ENCODE measurements at regions of chr5 and their contacts with region 1.

Region 1: DNA sequence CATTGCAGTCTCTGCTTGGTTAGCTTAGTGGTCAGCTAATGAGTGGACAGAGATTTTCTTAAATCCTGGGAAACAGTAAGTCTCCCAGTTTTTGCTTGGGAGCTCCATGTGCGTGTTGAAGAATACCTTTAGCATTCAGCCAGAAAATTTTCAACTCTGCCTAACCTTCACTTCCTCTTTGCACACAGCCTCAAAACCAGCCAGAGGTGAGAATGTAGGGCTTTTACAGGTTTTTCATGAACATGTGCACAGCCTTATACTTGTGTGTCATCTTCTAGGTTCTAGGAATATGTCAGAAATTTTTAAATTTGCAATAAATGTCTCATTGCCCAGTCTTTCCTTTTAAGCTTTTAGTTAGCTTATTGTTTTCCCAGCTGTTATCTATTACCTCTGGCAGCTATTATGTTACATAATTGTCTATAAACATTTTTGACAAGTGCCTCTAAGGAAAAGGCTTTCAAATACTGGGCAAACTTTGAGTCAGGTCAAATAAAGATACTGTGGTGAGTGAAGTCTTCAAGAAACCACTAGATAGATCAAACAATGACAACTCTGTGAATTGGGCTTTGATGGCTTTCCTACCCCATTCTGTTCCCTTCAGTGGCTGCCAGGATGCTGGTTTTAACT is 12.7 kb downstream of the ADGRV1 start:
- DNase-seq: peak; percentile 86
- ATAC-seq: peak; percentile 96
- H3K4me3 ChIP-seq: no peak overlapping the region
- H3K27ac ChIP-seq: peak overlapping the region; percentile 68
- H3K4me1 ChIP-seq: peaks cover 26% of the 10 kb centered on the region
- H3K27me3 ChIP-seq: no peaks in the 10 kb centered on the region
- CTCF ChIP-seq: no peak

Region 2: DNA sequence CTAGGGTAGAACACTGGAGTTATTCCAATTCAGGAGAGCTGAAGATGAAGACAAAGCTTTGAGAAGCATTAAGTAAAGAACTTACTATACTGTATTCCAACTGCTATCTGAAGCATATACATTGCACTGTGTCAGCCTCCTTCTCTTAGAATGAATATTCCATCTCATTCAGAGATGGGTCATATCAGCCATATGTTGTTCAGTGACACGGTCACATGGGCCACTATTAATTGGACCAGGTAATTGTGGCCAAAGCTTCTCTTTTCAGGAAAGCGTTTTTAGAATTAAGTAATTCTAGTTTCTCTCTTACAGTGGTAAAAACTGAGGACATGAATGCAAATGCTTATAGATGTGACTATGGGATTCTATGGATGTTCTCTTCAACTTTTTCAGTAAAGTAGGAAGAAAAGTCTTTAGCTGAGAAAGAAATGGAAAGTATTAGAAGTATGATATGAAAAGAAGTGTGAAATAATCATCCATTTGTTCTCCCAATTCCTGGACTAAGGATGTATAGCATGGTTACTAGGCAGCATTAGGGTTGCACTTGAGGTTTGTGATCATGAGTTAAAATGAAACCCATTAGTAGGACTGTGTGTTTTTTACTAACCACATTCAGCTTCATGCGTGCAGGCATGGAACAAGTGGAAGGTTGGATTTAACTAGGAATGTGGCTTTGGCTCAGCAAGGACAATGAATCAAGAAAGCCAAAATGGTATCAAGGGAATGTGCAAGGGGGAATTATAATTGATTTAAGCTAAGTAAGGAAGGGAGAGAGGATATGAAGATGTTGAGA is 202.6 kb before region 1 on chr5:
- CTCF ChIA-PET with region 1: no interaction called
- POLR2A ChIA-PET with region 1: no interaction called
- intact Hi-C with region 1: no loop called
- DNase-seq: no peak
- ATAC-seq: peak; percentile 55
- H3K4me3 ChIP-seq: no peak overlapping the region
- H3K27ac ChIP-seq: no peak overlapping the region
- H3K4me1 ChIP-seq: no peaks in the 10 kb centered on the region
- H3K27me3 ChIP-seq: no peaks in the 10 kb centered on the region
- CTCF ChIP-seq: no peak

Region 3: DNA sequence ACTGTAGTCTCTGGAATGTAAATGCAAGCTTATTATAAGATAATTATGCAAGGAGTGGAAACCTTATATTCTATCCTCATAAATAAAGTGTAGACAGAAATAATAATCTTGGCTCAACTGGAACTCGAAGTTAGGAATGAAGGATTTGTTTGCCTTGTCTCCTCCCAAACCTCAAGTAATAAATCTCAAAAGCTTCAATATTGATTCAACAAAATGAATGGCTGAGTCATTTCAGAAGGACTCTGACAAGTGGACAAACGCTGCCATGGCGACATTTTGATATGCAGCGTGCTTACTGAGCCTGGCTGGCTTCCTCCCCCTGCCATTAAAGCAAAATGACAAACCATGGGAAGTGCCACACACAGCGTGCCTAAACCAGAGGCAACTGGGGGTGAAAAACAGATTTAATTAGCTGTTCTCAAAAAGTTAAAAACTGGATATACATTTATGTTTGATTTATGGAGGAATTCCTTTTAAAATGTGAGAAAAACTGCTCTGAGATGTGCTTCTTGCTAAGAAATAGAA is 23.1 kb before region 1 on chr5:
- CTCF ChIA-PET with region 1: no interaction called
- POLR2A ChIA-PET with region 1: interaction called, 3 read pairs
- intact Hi-C with region 1: loop called (anchors 1 kb)
- DNase-seq: peak; percentile 98
- ATAC-seq: peak; percentile 92
- H3K4me3 ChIP-seq: peak overlapping the region; percentile 49
- H3K27ac ChIP-seq: peak overlapping the region; percentile 70
- H3K4me1 ChIP-seq: peaks cover 37% of the 10 kb centered on the region
- H3K27me3 ChIP-seq: no peaks in the 10 kb centered on the region
- CTCF ChIP-seq: no peak

Region 4: DNA sequence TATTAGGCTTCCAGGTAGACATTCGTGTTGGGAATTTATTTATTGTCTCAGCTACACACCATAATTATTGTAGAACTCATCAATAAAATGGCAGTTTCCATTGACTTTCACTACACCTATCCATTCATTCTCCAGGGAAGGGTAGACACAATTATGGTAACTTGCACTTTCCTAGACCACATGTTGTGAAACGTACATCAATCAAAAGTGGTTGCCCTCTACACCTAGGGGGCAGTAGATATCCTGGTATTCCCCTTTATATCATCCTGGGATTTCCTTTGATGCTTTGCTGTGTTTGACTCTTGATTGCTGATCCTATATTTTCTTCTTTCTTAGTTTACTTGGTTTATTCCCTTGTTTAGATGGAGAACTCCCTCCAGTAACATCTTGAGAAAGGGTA is 35.3 kb after region 1 on chr5:
- CTCF ChIA-PET with region 1: interaction called, 8 read pairs
- POLR2A ChIA-PET with region 1: no interaction called
- intact Hi-C with region 1: loop called (anchors 1 kb)
- DNase-seq: peak; percentile 53
- ATAC-seq: peak; percentile 45; the same call in 1 of the 2 replicates
- H3K4me3 ChIP-seq: no peak overlapping the region
- H3K27ac ChIP-seq: no peak overlapping the region
- H3K4me1 ChIP-seq: peaks cover 11% of the 10 kb centered on the region
- H3K27me3 ChIP-seq: no peaks in the 10 kb centered on the region
- CTCF ChIP-seq: peak; percentile 86